Astrocyte of the cerebellum (primary cell): ENCODE measurements at regions of chr5 and their contacts with region 1.

Region 1: GRCh38 chr5:51230336-51230735 is 152.9 kb upstream of the ISL1 start:
- DNase-seq: no peak
- H3K4me3 ChIP-seq: no peak overlapping the region
- CTCF ChIP-seq: no peak

Region 2: GRCh38 chr5:51272957-51273356 is 42.6 kb after region 1 on chr5:
- in situ Hi-C with region 1: no loop called
- DNase-seq: no peak
- H3K4me3 ChIP-seq: no peak overlapping the region
- CTCF ChIP-seq: no peak

Region 3: GRCh38 chr5:51286046-51286445 is 55.7 kb after region 1 on chr5:
- in situ Hi-C with region 1: loop called (anchors 5 kb)
- DNase-seq: no peak
- H3K4me3 ChIP-seq: no peak overlapping the region
- CTCF ChIP-seq: no peak